ENCODE measurements at regions of chr2 and their contacts with region 1.

Region 1: GRCh38 chr2:29115797-29116781 is 874 bp downstream of the CLIP4 start:
- DNase-seq: peak; percentile 51 to 89 (median 74)

Region 2: GRCh38 chr2:29063646-29064343 is 52.3 kb before region 1 on chr2:
- intact Hi-C with region 1: loop called (anchors 5 kb)
- DNase-seq: peak in 4 of 42 donors; percentile 33 to 53 (median 42)

Region 3: GRCh38 chr2:29075894-29076705 is 40.0 kb before region 1 on chr2:
- intact Hi-C with region 1: loop called (anchors 5 kb)
- DNase-seq: peak; percentile 61 to 93 (median 82)